ENCODE measurements at regions of chr2 and their contacts with region 1.

Region 1: GRCh38 chr2:216498418-216499413 is at the start of gene RPL37A:
- DNase-seq: peak; percentile 93
- H3K4me3 Mint-ChIP-seq: peak within 1 kb of the TSS; percentile 97
- H3K27ac Mint-ChIP-seq: peak within 1 kb of the TSS; percentile 99
- H3K4me1 Mint-ChIP-seq: peaks cover 45% of the 10 kb centered on the region
- H3K27me3 Mint-ChIP-seq: no peaks in the 10 kb centered on the region
- total RNA-seq, gene RPL37A: 4,165 to 4,237 TPM

Region 2: GRCh38 chr2:216478151-216478550 is 20.6 kb before region 1 on chr2:
- CTCF ChIA-PET with region 1: no interaction called
- POLR2A ChIA-PET with region 1: interaction called, 7 read pairs
- intact Hi-C with region 1: loop called (anchors 1 kb)
- DNase-seq: peak; percentile 52
- H3K4me3 Mint-ChIP-seq: no peak overlapping the region
- H3K27ac Mint-ChIP-seq: no peak overlapping the region
- H3K4me1 Mint-ChIP-seq: peaks cover 15% of the 10 kb centered on the region
- H3K27me3 Mint-ChIP-seq: no peaks in the 10 kb centered on the region

Measured in activated CD4-positive, alpha-beta memory T cell treated with anti-CD3 and anti-CD28 coated beads for 36 hours (primary cell).